ENCODE measurements at regions of chr2 and their contacts with region 1.

Region 1: GRCh38 chr2:48414980-48415835 is 114.7 kb upstream of the STON1 start:
- DNase-seq: no peak

Region 2: DNA sequence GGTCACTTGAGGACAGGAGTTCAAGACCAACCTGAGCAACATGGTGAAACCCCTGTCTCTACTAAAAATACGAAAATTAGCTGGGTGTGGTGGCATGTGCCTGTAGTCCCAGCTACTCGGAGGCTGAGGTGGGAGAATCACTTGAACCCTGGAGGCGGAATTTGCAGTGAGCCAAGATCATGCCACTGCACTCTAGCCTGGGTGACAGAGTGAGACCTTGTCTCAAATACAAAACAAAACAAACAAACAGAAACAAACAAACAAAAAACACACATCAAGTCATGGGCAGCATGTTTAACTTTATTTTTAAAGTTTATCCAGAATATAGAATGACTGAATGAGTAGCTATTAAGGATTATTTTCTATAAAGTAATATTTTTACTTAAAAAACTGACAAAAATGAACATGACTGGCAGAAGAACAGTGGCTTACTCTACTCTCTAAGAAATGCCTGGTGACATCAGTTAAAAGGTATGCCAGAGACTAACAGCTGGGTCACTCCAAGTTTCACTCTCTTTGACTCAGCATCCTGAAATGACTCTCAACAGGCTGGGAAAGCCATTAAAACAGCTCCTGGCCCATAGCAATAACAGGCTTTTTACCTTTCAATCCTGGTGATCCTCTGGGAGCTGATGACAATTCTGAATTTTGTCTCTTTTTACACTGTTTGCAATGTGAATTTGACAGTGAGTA is 166.8 kb before region 1 on chr2:
- intact Hi-C with region 1: loop called (anchors 5 kb)
- DNase-seq: no peak